CD8-positive, alpha-beta memory T cell (primary cell): ENCODE measurements at regions of chr19 and their contacts with region 1.

Region 1: GRCh38 chr19:44770550-44771257 is 7.0 kb upstream of the CBLC start:
- DNase-seq: peak; percentile 94 to 99 (median 96)
- H3K4me3 ChIP-seq: no peak overlapping the region
- H3K4me3 Mint-ChIP-seq: peak overlapping the region; percentile 24 to 78 (median 61)
- H3K27ac ChIP-seq: no peak overlapping the region
- H3K27ac Mint-ChIP-seq: peak overlapping the region; percentile 23 to 92 (median 88)
- H3K4me1 ChIP-seq: peaks cover 8% of the 10 kb centered on the region
- H3K4me1 Mint-ChIP-seq: peaks cover 11 to 31% (median 29%) of the 10 kb centered on the region in 3 donors
- H3K27me3 ChIP-seq: no peaks in the 10 kb centered on the region
- H3K27me3 Mint-ChIP-seq: no peaks in the 10 kb centered on the region

Region 2: GRCh38 chr19:44689056-44689895 is 81.4 kb before region 1 on chr19:
- CTCF ChIA-PET with region 1: interaction called, 50 read pairs
- POLR2A ChIA-PET with region 1: interaction called, 4 read pairs
- DNase-seq: peak; percentile 47 to 81 (median 68)
- H3K4me3 ChIP-seq: no peak overlapping the region
- H3K4me3 Mint-ChIP-seq: no peak overlapping the region
- H3K27ac ChIP-seq: no peak overlapping the region
- H3K27ac Mint-ChIP-seq: peak overlapping the region in 4 of 8 donors; percentile 21 to 70 (median 52)
- H3K4me1 ChIP-seq: peaks cover 22% of the 10 kb centered on the region
- H3K4me1 Mint-ChIP-seq: peaks cover 19 to 29% (median 23%) of the 10 kb centered on the region in 3 donors
- H3K27me3 ChIP-seq: no peaks in the 10 kb centered on the region
- H3K27me3 Mint-ChIP-seq: peaks cover 2 to 17% of the 10 kb centered on the region in 2 donors

Region 3: DNA sequence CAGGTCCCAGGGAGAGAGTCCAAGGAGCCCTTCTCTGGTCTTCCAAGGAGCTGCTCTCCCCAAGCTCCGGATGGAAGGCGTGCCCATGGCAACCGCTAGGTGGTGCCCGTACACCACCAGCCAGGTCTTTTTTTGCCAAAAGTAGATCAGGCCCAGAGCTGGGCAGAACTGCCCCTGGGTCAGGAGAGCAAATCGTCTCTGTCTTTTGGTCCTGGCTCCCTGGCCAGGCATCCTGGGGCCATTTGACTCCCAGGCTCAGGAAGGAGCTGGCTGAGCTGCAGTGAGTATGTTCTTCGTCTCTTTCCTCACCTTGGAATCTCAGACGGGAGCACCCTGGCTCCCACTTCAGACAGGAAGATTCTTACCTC is 46.8 kb before region 1 on chr19:
- CTCF ChIA-PET with region 1: interaction called, 299 read pairs
- POLR2A ChIA-PET with region 1: interaction called, 18 read pairs
- DNase-seq: peak; percentile 67 to 85 (median 77)
- H3K4me3 ChIP-seq: no peak overlapping the region
- H3K4me3 Mint-ChIP-seq: no peak overlapping the region
- H3K27ac ChIP-seq: no peak overlapping the region
- H3K27ac Mint-ChIP-seq: peak overlapping the region in 5 of 8 donors; percentile 13 to 81 (median 23)
- H3K4me1 ChIP-seq: peaks cover 19% of the 10 kb centered on the region
- H3K4me1 Mint-ChIP-seq: peaks cover 16 to 31% (median 21%) of the 10 kb centered on the region in 3 donors
- H3K27me3 ChIP-seq: no peaks in the 10 kb centered on the region
- H3K27me3 Mint-ChIP-seq: peaks cover 0 to 3% of the 10 kb centered on the region in 2 donors

Region 4: DNA sequence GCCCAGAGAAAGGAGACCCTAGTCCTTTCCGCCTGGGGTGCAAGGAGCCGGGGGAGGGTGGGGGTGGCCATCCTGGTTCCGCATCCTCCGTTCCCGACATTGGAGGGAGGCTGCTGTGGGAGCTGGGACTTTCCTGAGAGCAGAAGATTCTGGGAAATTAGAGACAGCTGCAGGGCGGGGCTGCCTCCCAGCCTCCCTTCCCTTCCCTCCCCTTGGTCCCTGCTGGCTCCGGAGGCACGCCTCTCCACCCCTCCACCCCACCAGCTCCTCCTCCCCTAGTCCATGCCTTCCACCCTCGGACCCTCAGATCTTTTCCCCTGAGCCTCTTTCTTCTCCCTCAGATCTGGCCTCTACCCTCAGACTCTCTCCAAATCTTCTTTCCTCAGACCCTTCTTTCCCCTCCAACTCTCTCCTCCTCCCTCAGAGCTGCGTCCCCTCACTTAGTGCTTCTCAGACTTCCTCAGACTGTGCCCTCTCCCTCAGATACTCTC is 25.3 kb before region 1 on chr19:
- CTCF ChIA-PET with region 1: interaction called, 13 read pairs
- POLR2A ChIA-PET with region 1: no interaction called
- DNase-seq: no peak
- H3K4me3 ChIP-seq: no peak overlapping the region
- H3K4me3 Mint-ChIP-seq: peak overlapping the region in 1 of 7 donors; percentile 72
- H3K27ac ChIP-seq: peak overlapping the region; percentile 6
- H3K27ac Mint-ChIP-seq: peak overlapping the region in 7 of 8 donors; percentile 94 to 98 (median 96)
- H3K4me1 ChIP-seq: peaks cover 17% of the 10 kb centered on the region
- H3K4me1 Mint-ChIP-seq: peaks cover 22 to 38% (median 32%) of the 10 kb centered on the region in 3 donors
- H3K27me3 ChIP-seq: no peaks in the 10 kb centered on the region
- H3K27me3 Mint-ChIP-seq: no peaks in the 10 kb centered on the region

Region 5: DNA sequence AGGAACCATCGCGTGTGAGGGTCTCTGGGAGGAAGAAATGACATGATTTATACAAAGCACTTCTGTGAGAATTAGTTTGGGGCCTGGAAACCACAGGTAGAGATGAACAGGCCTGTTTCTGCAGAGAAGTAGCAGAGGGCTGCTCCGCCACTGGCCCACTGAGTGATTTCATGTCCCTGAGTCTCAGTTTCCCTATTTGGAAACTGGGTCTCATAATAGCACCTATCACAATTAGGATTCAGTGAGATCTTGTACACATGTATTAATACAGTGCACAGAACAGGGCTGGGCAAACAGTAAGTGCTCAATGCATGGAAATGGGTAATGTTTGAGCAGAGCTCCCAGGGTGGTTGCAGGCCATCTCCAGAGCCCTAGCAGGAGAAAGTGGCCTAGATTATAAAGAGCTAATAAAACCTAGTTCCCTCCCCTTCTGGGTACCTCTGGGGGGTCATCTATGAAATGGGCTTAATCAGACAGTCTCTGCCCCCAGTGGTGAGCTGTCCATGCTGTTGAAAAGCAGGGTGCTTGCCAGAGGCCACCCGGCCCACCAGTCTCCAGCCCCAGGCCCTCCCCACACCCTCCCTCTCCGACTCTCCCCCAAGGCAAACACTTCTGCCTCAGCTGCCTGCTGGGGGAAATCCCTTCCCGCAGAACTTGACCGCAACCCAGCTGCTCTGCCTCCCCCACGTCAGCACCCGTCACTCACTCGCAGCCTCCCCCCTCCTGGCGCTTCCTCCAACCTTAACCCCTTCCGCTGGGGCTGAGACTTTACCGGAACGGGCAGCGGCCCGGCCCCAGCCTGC is 17.7 kb before region 1 on chr19:
- CTCF ChIA-PET with region 1: interaction called, 32 read pairs
- POLR2A ChIA-PET with region 1: interaction called, 4 read pairs
- DNase-seq: peak; percentile 93 to 97 (median 96)
- H3K4me3 ChIP-seq: peak overlapping the region; percentile 43
- H3K4me3 Mint-ChIP-seq: peak overlapping the region; percentile 89 to 98 (median 94)
- H3K27ac ChIP-seq: peak overlapping the region; percentile 18
- H3K27ac Mint-ChIP-seq: peak overlapping the region; percentile 96 to 99 (median 98)
- H3K4me1 ChIP-seq: peaks cover 59% of the 10 kb centered on the region
- H3K4me1 Mint-ChIP-seq: peaks cover 55 to 74% (median 67%) of the 10 kb centered on the region in 3 donors
- H3K27me3 ChIP-seq: no peaks in the 10 kb centered on the region
- H3K27me3 Mint-ChIP-seq: peaks cover 0 to 3% of the 10 kb centered on the region in 2 donors

Region 6: DNA sequence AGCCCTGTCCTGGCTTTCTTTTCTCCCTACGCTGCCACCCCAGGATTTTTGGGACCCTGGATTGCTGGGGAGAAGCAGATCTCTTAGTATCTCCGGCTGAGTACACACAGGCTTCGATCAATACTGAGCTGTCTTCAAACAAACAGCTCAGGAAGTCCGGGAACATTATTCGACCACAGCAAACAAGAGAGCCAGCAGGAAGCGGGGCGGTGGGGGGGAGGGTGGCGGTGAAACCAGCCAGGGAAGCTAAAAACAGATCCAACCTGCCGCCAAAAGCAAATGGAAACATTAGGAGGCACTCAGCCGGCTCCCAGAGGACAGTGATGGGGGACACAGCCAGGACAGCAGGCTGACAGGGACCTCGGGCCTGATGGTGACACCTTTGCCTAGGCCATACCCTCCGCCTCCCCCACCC is 26.0 kb after region 1 on chr19:
- CTCF ChIA-PET with region 1: no interaction called
- POLR2A ChIA-PET with region 1: no interaction called
- DNase-seq: no peak
- H3K4me3 ChIP-seq: no peak overlapping the region
- H3K4me3 Mint-ChIP-seq: peak overlapping the region in 2 of 7 donors; percentile 7 to 46
- H3K27ac ChIP-seq: no peak overlapping the region
- H3K27ac Mint-ChIP-seq: no peak overlapping the region
- H3K4me1 ChIP-seq: no peaks in the 10 kb centered on the region
- H3K4me1 Mint-ChIP-seq: peaks cover 5 to 10% (median 8%) of the 10 kb centered on the region in 3 donors
- H3K27me3 ChIP-seq: no peaks in the 10 kb centered on the region
- H3K27me3 Mint-ChIP-seq: peaks cover 0 to 2% of the 10 kb centered on the region in 2 donors